IMR-90 (cell line): ENCODE measurements at regions of chr1 and their contacts with region 1.

Region 1: DNA sequence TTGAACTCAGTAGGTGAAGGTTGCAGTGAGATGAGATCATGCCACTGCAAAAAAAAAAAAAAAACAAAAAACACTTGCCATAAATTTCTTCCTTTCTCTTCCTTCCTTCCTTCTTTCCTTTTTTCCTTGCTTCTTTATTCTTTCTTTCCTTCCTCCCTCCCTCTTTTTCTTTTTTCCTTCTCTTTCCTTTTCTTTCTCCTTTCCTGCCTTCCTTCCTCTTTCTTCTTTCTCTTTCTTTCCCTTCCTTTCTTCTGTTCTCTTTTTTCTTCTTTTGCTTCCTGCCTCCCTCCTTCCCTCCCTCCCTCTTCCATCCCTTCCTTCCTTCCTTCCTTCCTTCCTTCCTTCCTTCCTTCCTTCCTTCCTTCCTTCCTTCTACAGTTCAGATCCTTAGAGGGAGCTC is 71.2 kb downstream of the LYPLAL1 start:
- DNase-seq: no peak
- ATAC-seq: no peak
- H3K4me3 ChIP-seq: no peak overlapping the region
- H3K27ac ChIP-seq: no peak overlapping the region
- H3K4me1 ChIP-seq: peaks cover 6% of the 10 kb centered on the region
- H3K27me3 ChIP-seq: no peaks in the 10 kb centered on the region
- CTCF ChIP-seq: no peak
- POLR2A ChIP-seq: no peak
- RAD21 ChIP-seq: no peak

Region 2: DNA sequence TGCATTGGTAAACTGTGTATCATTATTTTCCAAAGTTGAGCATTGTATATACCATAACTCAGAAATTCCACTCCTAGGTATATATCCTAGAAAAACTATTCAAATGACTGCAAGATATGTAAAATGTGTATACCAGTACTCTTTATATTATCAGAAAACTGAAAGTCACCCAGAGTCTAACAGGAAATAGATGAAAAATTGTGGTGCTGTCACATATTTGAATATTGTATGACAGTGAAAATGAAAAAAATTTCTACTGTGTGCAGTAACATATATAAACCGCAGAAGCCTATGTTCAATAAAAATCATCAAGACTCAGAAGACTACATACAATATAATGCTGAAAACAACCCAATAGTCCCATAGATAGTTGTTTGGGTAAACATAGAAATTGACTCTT is 145.6 kb before region 1 on chr1:
- CTCF ChIA-PET with region 1: no interaction called
- POLR2A ChIA-PET with region 1: no interaction called
- dilution Hi-C with region 1: no loop called
- in situ Hi-C with region 1: no loop called
- intact Hi-C with region 1: no loop called
- DNase-seq: no peak
- ATAC-seq: no peak
- H3K4me3 ChIP-seq: no peak overlapping the region
- H3K27ac ChIP-seq: no peak overlapping the region
- H3K4me1 ChIP-seq: no peaks in the 10 kb centered on the region
- H3K27me3 ChIP-seq: no peaks in the 10 kb centered on the region
- CTCF ChIP-seq: no peak
- POLR2A ChIP-seq: no peak
- RAD21 ChIP-seq: no peak

Region 3: DNA sequence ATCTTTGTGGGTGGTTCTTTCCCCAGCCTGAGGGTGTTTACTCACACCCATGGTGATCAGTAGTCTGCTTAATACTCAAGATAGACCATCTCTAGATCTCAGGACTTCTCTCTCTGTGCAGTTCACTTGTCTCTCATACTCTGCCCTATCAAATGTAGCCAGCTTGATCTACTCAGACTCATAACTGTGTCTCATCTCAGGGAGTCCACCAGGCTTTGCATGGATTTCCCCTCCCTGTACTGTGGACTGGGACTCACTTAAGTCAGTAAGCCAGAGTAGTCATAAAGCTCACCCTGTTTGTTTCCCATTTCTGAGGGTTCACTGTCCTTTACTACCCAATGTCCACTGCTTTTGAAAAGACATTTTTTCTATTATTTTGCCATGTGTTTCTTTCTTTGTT is 29.4 kb before region 1 on chr1:
- CTCF ChIA-PET with region 1: no interaction called
- POLR2A ChIA-PET with region 1: interaction called, 38 read pairs
- dilution Hi-C with region 1: no loop called
- in situ Hi-C with region 1: no loop called
- intact Hi-C with region 1: no loop called
- DNase-seq: no peak
- ATAC-seq: no peak
- H3K4me3 ChIP-seq: no peak overlapping the region
- H3K27ac ChIP-seq: no peak overlapping the region
- H3K4me1 ChIP-seq: no peaks in the 10 kb centered on the region; the same call in 1 of the 2 replicates
- H3K27me3 ChIP-seq: no peaks in the 10 kb centered on the region
- CTCF ChIP-seq: no peak
- POLR2A ChIP-seq: no peak
- RAD21 ChIP-seq: no peak